ENCODE measurements at regions of chr10 and their contacts with region 1.

Region 1: DNA sequence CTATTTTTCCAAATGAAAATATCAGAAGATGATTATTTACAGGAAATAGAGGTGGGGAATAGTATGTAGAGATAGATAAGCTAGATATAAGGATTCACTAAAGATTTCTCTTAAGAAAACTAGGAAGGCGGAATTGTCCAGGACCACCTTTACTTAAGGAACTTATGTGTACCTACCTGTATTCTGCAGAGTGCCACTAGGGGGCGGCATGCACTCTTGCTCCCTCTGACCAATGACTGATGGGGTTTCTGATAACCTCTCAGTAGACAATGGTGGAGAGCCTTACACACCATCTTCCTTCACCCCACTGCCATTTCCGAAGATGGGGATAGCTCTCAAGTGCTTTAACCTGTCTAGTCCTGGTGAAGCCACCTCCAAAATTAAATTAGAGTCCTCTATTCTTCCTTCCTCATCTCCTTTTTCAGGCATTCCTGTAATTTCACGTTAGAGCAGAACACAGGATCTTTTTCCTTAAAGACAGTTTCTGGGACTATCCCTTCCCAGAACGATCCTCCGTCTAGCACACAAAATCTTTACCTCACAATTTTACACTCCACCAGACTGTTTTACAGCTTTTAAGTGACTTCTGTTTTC is 453.1 kb downstream of the SORCS1 start:
- DNase-seq: peak; percentile 70
- H3K4me3 ChIP-seq: no peak overlapping the region
- H3K27ac ChIP-seq: no peak overlapping the region
- H3K4me1 ChIP-seq: no peaks in the 10 kb centered on the region
- H3K27me3 ChIP-seq: no peaks in the 10 kb centered on the region
- CTCF ChIP-seq: peak; percentile 96

Region 2: DNA sequence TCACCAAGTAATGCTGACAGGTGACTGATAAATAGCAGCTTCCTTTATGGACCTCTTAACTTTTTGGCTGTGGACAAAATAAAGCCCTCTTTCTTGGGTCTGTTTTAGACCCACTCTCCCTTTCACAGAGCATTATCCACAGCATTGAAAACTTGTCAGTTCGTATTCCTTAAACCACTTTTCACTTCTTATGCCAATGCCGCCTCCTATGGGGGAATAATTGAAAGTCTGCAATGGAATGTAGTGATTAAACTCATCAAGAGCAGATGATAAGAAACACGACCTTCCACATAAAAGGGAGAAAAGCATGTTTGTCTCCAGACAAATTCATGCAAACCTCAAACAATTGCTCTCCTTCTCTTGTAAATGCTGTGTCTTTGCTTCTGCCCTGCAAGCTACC is 299.7 kb after region 1 on chr10:
- CTCF ChIA-PET with region 1: no interaction called
- POLR2A ChIA-PET with region 1: no interaction called
- intact Hi-C with region 1: loop called (anchors 10 kb)
- DNase-seq: peak; percentile 57
- H3K4me3 ChIP-seq: no peak overlapping the region
- H3K27ac ChIP-seq: no peak overlapping the region
- H3K4me1 ChIP-seq: no peaks in the 10 kb centered on the region
- H3K27me3 ChIP-seq: no peaks in the 10 kb centered on the region
- CTCF ChIP-seq: peak; percentile 56

Region 3: GRCh38 chr10:107529350-107529749 is 817.9 kb after region 1 on chr10:
- CTCF ChIA-PET with region 1: no interaction called
- POLR2A ChIA-PET with region 1: no interaction called
- intact Hi-C with region 1: no loop called
- DNase-seq: no peak
- H3K4me3 ChIP-seq: no peak overlapping the region
- H3K27ac ChIP-seq: no peak overlapping the region
- H3K4me1 ChIP-seq: no peaks in the 10 kb centered on the region
- H3K27me3 ChIP-seq: no peaks in the 10 kb centered on the region
- CTCF ChIP-seq: no peak

Measured in A673 (cell line).